ENCODE measurements at regions of chr1 and their contacts with region 1.

Region 1: DNA sequence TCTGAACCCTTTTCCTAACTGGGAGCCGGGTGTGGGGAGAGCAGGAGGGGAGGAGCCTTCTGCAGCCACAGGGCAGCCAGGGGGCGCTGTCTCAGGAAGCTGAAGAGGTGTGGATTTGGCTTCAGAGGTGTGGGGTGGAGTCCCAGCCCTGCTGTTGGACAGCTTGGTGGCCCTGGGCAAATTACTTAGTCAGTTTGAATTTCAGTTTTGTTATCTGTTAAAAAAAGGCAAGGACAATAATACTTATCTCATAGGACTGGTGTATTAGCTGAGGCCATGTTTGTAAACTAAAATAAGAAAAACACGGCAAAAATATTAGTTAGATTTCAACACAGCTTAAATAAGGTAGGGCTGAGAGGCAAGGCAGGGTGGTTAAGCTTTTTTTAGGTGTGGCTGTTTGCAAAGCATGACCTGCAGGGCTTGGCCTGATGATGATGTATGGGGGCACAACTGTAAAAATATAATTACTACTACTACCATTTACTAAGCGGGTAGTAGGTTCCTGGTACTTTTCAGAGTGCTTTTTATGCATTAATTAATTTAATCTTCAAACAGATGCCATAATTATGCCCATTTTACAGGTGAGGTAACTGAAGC is 111.8 kb downstream of the PLXNA2 start:
- DNase-seq: peak; percentile 87 to 91
- H3K4me3 ChIP-seq: no peak overlapping the region
- H3K4me3 Mint-ChIP-seq: peak overlapping the region; percentile 59
- H3K27ac Mint-ChIP-seq: no peak overlapping the region
- H3K4me1 ChIP-seq: peaks cover 19% of the 10 kb centered on the region
- H3K4me1 Mint-ChIP-seq: peaks cover 18% of the 10 kb centered on the region
- H3K27me3 ChIP-seq: no peaks in the 10 kb centered on the region
- H3K27me3 Mint-ChIP-seq: no peaks in the 10 kb centered on the region
- CTCF ChIP-seq: peak; percentile 74 to 93

Region 2: GRCh38 chr1:207910591-207911354 is 221.6 kb before region 1 on chr1 and contains the start of gene CD34:
- CTCF ChIA-PET with region 1: no interaction called
- POLR2A ChIA-PET with region 1: no interaction called
- intact Hi-C with region 1: no loop called
- DNase-seq: no peak
- H3K4me3 ChIP-seq: peak within 1 kb of the TSS; percentile 25
- H3K4me3 Mint-ChIP-seq: peak within 1 kb of the TSS; percentile 63
- H3K27ac Mint-ChIP-seq: no peak within 1 kb of the TSS
- H3K4me1 ChIP-seq: no peaks in the 10 kb centered on the region
- H3K4me1 Mint-ChIP-seq: peaks cover 8% of the 10 kb centered on the region
- H3K27me3 ChIP-seq: no peaks in the 10 kb centered on the region; the same call in 1 of the 2 replicates
- H3K27me3 Mint-ChIP-seq: peaks cover 4% of the 10 kb centered on the region
- CTCF ChIP-seq: no peak
- total RNA-seq, gene CD34: not detected in 2 replicates

Region 3: GRCh38 chr1:208149776-208150514 is 17.6 kb after region 1 on chr1:
- CTCF ChIA-PET with region 1: interaction called, 17 read pairs
- POLR2A ChIA-PET with region 1: no interaction called
- intact Hi-C with region 1: loop called (anchors 1 kb)
- DNase-seq: peak; percentile 62 to 68
- H3K4me3 ChIP-seq: no peak overlapping the region
- H3K4me3 Mint-ChIP-seq: no peak overlapping the region
- H3K27ac Mint-ChIP-seq: no peak overlapping the region
- H3K4me1 ChIP-seq: peaks cover 16% of the 10 kb centered on the region
- H3K4me1 Mint-ChIP-seq: peaks cover 9% of the 10 kb centered on the region
- H3K27me3 ChIP-seq: no peaks in the 10 kb centered on the region
- H3K27me3 Mint-ChIP-seq: no peaks in the 10 kb centered on the region
- CTCF ChIP-seq: no peak

Region 4: DNA sequence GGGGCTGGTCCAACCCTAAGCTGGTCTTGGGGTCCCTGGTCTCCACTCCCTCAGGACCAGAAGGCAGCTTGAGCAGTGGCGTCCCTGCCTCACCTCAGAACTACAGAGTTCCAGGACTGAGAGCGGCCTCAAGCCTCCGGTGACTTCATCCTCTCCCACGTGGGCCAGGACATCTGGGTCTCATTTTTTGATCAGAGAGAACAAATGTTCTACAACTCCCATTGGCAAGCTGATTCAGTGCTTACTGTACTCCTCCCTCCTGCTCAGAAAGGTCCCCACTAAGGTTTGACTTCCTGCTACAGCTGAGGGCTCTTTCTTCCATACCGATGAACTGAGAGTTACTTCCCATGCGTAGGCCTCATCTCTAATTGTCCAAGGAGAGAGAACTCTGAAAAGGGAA is 33.3 kb after region 1 on chr1:
- CTCF ChIA-PET with region 1: no interaction called
- POLR2A ChIA-PET with region 1: no interaction called
- intact Hi-C with region 1: no loop called
- DNase-seq: no peak
- H3K4me3 ChIP-seq: no peak overlapping the region
- H3K4me3 Mint-ChIP-seq: no peak overlapping the region
- H3K27ac Mint-ChIP-seq: no peak overlapping the region
- H3K4me1 ChIP-seq: peaks cover 17% of the 10 kb centered on the region
- H3K4me1 Mint-ChIP-seq: peaks cover 19% of the 10 kb centered on the region
- H3K27me3 ChIP-seq: no peaks in the 10 kb centered on the region
- H3K27me3 Mint-ChIP-seq: no peaks in the 10 kb centered on the region
- CTCF ChIP-seq: no peak

Region 5: GRCh38 chr1:208177656-208178055 is 45.3 kb after region 1 on chr1:
- CTCF ChIA-PET with region 1: interaction called, 8 read pairs
- POLR2A ChIA-PET with region 1: interaction called, 5 read pairs
- intact Hi-C with region 1: loop called (anchors 2 kb)
- DNase-seq: peak; percentile 74 to 85
- H3K4me3 ChIP-seq: no peak overlapping the region
- H3K4me3 Mint-ChIP-seq: peak overlapping the region; percentile 55
- H3K27ac Mint-ChIP-seq: peak overlapping the region; percentile 78
- H3K4me1 ChIP-seq: peaks cover 84% of the 10 kb centered on the region
- H3K4me1 Mint-ChIP-seq: peaks cover 66% of the 10 kb centered on the region
- H3K27me3 ChIP-seq: no peaks in the 10 kb centered on the region
- H3K27me3 Mint-ChIP-seq: no peaks in the 10 kb centered on the region
- CTCF ChIP-seq: no peak

Region 6: GRCh38 chr1:208238710-208239472 is 106.5 kb after region 1 on chr1:
- CTCF ChIA-PET with region 1: interaction called, 46 read pairs
- POLR2A ChIA-PET with region 1: no interaction called
- intact Hi-C with region 1: loop called (anchors 1 kb)
- DNase-seq: peak; percentile 50 to 53
- H3K4me3 ChIP-seq: no peak overlapping the region
- H3K4me3 Mint-ChIP-seq: no peak overlapping the region
- H3K27ac Mint-ChIP-seq: no peak overlapping the region
- H3K4me1 ChIP-seq: peaks cover 34% of the 10 kb centered on the region
- H3K4me1 Mint-ChIP-seq: peaks cover 13% of the 10 kb centered on the region
- H3K27me3 ChIP-seq: 0 out of 2 replicates have a peak, but pooled peaks cover 1% of the 10 kb centered on the region
- H3K27me3 Mint-ChIP-seq: peaks cover 6% of the 10 kb centered on the region
- CTCF ChIP-seq: peak; percentile 83 to 86

Measured in Caco-2 (cell line).